Right ventricle myocardium superior (tissue), 1 donor: ENCODE measurements at regions of chr1 and their contacts with region 1.

Region 1: DNA sequence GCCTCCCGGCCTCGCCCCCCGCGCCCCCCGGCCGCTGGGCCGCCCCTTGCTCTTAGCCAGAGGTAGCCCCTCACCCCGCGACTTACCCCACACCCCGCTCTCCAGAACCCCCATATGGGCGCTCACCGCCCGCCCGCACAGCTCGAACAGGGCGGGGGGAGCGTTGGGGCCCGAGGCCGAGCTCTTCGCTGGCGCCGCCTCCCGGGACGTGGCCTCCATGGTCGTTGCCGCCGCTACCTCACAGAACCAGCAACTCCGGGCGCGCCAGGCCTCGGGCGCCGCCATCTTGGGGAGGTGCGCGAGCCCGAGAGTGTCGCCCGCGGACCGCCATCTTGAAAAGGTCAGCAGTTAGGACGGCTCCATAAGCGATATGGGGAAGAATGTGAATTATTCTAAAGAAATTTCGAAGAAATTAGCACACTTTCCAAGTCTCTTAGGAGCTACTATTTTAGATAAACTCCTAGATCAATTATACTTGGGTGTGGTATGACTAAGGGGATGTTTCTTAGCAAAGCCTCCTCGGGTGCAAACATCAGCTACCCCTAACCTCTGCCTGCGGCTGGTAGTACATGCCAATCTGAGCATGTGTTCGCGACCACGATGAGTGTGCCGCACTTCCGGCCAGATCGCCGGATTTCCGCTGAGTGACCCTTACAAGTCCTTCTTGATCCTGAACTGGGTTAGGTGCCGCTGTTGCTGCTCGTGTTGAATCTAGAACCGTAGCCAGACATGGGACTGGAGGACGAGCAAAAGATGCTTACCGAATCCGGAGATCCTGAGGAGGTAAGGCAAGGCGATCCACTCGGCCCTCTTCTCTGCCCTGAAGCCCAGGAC is at the starts of genes LRRC41 and UQCRH:
- DNase-seq: peak; percentile 97
- ATAC-seq: peak; percentile 93
- total RNA-seq, gene LRRC41: 33.6 TPM
- total RNA-seq, gene UQCRH: 1,143 TPM

Region 2: DNA sequence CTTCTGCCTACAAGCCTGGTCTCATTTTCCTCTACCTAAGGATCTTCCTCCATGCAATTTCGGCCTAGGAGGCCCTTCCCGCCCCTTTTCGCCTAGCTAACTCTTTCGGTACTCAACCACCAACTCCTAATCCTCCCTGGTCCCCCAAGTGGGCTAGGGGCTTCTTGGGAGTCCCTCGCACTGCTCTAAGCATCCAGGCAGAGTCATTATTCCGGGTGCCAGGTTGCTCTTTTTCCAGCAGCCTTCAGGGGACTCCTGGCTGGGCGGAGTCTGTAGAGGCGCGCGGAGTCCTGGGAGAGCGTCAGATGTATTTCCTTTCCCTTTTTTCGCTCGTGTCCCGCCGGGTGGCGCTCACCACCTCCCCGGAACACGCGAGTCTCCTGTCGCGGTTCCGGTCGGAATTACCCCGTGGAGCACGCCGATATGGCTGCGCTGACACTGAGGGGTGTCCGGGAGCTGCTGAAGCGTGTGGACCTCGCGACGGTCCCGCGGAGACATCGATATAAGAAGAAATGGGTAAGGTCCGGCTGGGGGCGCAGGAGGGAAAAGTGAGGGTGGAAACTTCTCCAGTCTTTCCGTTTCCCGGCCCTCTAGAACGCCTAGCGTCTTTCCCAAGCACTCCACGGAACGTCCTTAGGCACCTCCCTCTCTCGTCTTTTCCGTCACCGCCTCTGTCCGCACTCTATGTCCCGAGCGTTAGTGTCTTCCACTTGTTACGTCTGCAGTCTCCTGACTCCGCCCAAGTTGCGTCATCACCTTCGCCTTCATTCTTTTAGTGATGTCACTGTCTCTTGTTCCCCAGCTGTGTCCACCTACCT is 37.4 kb after region 1 on chr1 and contains the start of gene NSUN4:
- intact Hi-C with region 1: loop called (anchors 5 kb)
- DNase-seq: peak; percentile 95
- ATAC-seq: peak; percentile 96
- total RNA-seq, gene NSUN4: 15.5 TPM